Cardiac septum (tissue), 1 donor: ENCODE measurements at regions of chr1 and their contacts with region 1.

Region 1: GRCh38 chr1:153626922-153627796 is at the start of gene S100A13:
- DNase-seq: no peak
- total RNA-seq, gene S100A13: 200 TPM

Region 2: GRCh38 chr1:153670859-153671627 is 43.9 kb after region 1 on chr1 and contains the start of gene ILF2:
- intact Hi-C with region 1: loop called (anchors 5 kb)
- DNase-seq: peak; percentile 96
- total RNA-seq, gene ILF2: 76.5 TPM